MCF 10A (cell line): ENCODE measurements at regions of chr17 and their contacts with region 1.

Region 1: DNA sequence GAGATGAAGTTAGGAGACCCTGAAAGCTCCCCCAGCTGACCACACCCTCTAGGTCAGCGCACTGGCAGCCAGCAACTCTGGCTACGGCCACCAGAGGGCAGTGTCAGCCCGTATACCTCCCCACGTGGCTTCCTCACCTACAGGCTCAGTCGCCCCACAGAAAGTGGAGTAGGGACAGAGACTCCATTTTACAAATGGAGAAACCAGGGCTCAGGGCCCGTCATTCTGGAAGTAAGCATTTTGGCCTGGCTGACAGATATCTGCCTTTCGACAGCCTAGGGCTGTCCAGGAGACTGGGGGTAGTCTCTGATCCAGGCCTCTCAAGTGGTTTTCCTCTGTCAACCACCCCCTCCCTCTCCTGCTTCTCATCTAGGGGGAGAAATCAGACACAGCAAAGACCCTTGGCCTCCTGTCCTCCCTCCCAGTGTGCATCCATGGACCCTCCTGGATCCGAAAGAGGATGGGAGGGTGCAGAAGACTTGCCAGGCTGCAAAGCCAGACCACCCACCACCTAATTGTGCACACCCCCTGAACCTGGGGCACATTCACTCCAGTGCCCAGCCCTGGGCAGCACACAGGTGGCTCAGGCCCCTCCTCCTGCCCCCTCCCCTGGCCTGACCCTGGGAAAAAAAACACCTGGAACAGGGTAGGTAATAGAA is 3.8 kb upstream of the HAP1 start:
- DNase-seq: peak; percentile 82
- H3K4me3 Mint-ChIP-seq: no peak overlapping the region
- H3K27ac Mint-ChIP-seq: peak overlapping the region; percentile 42
- H3K4me1 Mint-ChIP-seq: peaks cover 16% of the 10 kb centered on the region
- H3K27me3 Mint-ChIP-seq: peaks cover 40% of the 10 kb centered on the region
- CTCF ChIP-seq: peak; percentile 95

Region 2: GRCh38 chr17:41777574-41778188 is 39.5 kb after region 1 on chr17:
- CTCF ChIA-PET with region 1: interaction called, 8 read pairs
- POLR2A ChIA-PET with region 1: interaction called, 4 read pairs
- intact Hi-C with region 1: loop called (anchors 2 kb)
- DNase-seq: peak; percentile 92
- H3K4me3 Mint-ChIP-seq: no peak overlapping the region
- H3K27ac Mint-ChIP-seq: peak overlapping the region; percentile 71
- H3K4me1 Mint-ChIP-seq: peaks cover 33% of the 10 kb centered on the region
- H3K27me3 Mint-ChIP-seq: no peaks in the 10 kb centered on the region
- CTCF ChIP-seq: no peak

Region 3: GRCh38 chr17:41801374-41802271 is 63.4 kb after region 1 on chr17:
- CTCF ChIA-PET with region 1: interaction called, 37 read pairs
- POLR2A ChIA-PET with region 1: interaction called, 23 read pairs
- intact Hi-C with region 1: loop called (anchors 1 kb)
- DNase-seq: peak; percentile 91
- H3K4me3 Mint-ChIP-seq: peak overlapping the region; percentile 56
- H3K27ac Mint-ChIP-seq: peak overlapping the region; percentile 89
- H3K4me1 Mint-ChIP-seq: peaks cover 22% of the 10 kb centered on the region
- H3K27me3 Mint-ChIP-seq: no peaks in the 10 kb centered on the region
- CTCF ChIP-seq: peak; percentile 95

Region 4: DNA sequence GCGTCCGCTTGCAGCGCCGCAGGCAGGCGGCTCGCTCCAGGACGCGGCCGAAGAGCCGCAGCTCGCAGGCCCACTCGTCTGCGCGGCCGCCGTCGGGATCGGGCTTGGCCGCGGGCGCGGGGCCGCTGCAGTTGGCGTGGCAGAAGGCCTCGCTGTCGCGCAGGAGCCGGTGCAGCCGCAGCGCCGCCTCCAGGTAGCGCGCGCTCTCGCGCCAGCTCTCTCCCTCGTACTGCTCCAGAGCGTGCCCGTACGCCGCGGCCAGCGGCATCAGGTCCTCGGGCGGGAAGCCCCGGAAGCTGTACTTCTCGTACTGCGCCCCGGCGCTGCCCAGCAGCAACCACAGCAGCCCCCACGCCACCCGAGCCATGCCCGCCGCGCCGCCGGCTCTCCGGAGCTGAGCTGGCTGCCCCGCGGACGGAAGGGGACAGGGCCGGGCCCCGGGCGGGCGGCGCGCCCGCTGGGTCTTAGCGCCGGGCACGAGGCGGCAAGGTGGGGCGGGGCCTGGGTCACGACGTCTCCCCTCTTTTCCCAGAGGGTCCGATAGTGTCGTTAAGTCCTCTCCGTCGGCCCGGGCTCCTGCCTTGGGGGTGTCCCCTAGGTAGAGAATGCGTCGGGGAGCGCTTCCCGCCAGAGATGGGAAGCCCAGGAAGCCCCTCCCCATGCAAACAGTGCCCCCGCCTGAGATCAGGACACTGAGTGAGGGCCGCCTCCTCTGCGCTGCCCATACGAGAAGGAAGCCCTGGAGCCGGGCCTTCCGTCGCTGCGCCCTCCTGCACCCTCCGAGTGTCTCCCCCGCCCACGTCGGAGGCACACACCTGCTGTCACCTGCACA is 73.6 kb after region 1 on chr17 and contains the start of gene P3H4:
- CTCF ChIA-PET with region 1: interaction called, 8 read pairs
- POLR2A ChIA-PET with region 1: interaction called, 5 read pairs
- intact Hi-C with region 1: loop called (anchors 2 kb)
- DNase-seq: peak; percentile 74
- H3K4me3 Mint-ChIP-seq: peak within 1 kb of the TSS; percentile 95
- H3K27ac Mint-ChIP-seq: peak within 1 kb of the TSS; percentile 85
- H3K4me1 Mint-ChIP-seq: peaks cover 19% of the 10 kb centered on the region
- H3K27me3 Mint-ChIP-seq: no peaks in the 10 kb centered on the region
- CTCF ChIP-seq: peak; percentile 52
- total RNA-seq, gene P3H4: 36.4 and 41.5 TPM in 2 replicates

Region 5: DNA sequence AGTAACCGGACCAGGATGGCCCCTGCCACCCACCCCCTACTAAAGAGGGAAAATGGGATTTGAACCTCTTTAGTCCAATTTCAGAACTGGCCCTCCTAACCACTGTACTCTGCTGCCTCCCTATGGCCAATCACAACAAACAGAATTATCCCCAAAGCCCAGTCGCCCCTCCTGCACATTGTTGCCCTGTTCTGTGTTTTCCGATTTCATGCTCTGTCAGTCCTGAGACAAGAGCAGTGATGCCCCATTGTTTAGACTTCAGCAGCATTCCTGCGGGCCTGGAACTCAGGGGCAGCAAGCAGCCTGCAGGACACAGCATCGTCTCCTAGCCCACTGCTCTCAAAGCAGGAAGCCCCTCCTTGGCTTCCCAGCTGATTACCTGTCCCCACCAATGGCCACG is 147.5 kb after region 1 on chr17:
- CTCF ChIA-PET with region 1: interaction called, 5 read pairs
- POLR2A ChIA-PET with region 1: no interaction called
- intact Hi-C with region 1: loop called (anchors 2 kb)
- DNase-seq: no peak
- H3K4me3 Mint-ChIP-seq: no peak overlapping the region
- H3K27ac Mint-ChIP-seq: no peak overlapping the region
- H3K4me1 Mint-ChIP-seq: no peaks in the 10 kb centered on the region
- H3K27me3 Mint-ChIP-seq: no peaks in the 10 kb centered on the region
- CTCF ChIP-seq: peak; percentile 25

Region 6: GRCh38 chr17:41959336-41960095 is 221.3 kb after region 1 on chr17:
- CTCF ChIA-PET with region 1: interaction called, 4 read pairs
- POLR2A ChIA-PET with region 1: no interaction called
- intact Hi-C with region 1: loop called (anchors 1 kb)
- DNase-seq: peak; percentile 55
- H3K4me3 Mint-ChIP-seq: no peak overlapping the region
- H3K27ac Mint-ChIP-seq: peak overlapping the region; percentile 16
- H3K4me1 Mint-ChIP-seq: no peaks in the 10 kb centered on the region
- H3K27me3 Mint-ChIP-seq: no peaks in the 10 kb centered on the region
- CTCF ChIP-seq: peak; percentile 44

Region 7: DNA sequence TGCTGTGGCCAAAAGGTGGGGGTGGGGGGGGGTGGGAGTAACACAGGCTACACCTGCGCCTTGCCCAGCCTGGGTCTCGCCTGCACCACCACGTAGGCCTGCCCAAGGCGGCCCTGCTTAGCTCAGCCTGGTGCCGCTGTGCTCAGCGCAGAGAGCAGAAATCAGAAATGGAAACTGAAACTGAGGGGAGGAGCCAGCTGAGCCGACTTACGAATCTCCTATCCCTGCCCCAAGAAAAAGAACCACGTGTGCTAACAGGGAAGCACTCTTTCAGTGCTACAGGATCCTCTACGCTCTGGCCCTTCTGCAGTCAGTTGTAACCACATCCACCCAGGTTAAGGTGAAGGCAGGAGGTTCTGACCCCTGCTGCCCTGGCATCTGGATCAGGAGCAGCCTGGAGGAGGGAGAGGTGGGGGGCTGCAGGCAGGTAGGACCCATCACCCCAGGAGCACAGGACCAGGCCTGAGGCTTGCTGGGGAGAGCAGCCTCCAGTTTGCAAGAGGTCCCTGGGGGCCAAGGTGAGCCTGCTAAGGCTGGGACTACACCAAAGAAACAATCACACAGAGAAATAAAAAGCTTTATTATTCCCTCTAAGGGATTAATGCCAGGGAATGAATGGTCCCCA is 374.5 kb after region 1 on chr17 and contains the start of gene DHX58:
- CTCF ChIA-PET with region 1: no interaction called
- POLR2A ChIA-PET with region 1: no interaction called
- intact Hi-C with region 1: loop called (anchors 5 kb)
- DNase-seq: peak; percentile 64
- H3K4me3 Mint-ChIP-seq: peak within 1 kb of the TSS; percentile 67
- H3K27ac Mint-ChIP-seq: peak within 1 kb of the TSS; percentile 35
- H3K4me1 Mint-ChIP-seq: no peaks in the 10 kb centered on the region
- H3K27me3 Mint-ChIP-seq: no peaks in the 10 kb centered on the region
- CTCF ChIP-seq: no peak
- total RNA-seq, gene DHX58: 2.8 and 4.2 TPM in 2 replicates